Posterior cingulate gyrus (tissue), 11 donors: ENCODE measurements at regions of chr12 and their contacts with region 1.

Region 1: GRCh38 chr12:10235761-10236631 is 23.3 kb downstream of the GABARAPL1 start:
- DNase-seq: peak in 5 of 10 donors; percentile 38 to 88 (median 51)

Region 2: GRCh38 chr12:10012630-10013330 is 223.2 kb before region 1 on chr12:
- intact Hi-C with region 1: no loop called
- DNase-seq: no peak

Region 3: GRCh38 chr12:10331642-10332239 is 95.7 kb after region 1 on chr12:
- intact Hi-C with region 1: loop called (anchors 5 kb)
- DNase-seq: no peak

Region 4: DNA sequence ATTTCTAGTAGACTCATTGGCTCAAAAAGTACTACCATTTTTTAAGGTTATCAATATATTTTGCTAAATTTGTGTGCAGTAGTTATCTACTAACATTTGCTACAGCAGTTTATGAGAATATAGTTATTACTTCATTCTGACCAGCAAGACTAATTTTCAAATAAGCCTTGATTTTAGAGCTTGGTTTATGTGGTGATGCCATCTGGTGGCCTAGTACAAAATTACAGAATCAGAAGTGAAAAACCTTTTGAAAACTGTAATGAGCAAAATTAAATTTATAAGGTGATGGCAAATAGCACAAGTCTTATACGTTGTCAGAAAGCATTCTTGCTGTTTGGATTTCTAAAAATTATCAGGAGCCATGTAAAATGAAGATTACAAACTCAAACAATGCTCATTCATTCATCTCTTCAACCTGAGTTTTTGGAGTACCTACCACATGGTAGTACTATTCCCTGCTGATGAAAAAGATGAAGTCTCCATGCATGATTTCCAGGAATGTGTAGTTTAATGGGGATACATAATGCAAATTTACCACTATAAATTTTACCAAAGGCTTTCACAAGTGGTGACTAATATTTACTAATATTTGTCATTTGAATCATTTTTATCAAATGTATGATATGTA is 326.4 kb after region 1 on chr12:
- intact Hi-C with region 1: loop called (anchors 2 kb)
- DNase-seq: peak in 1 of 10 donors; percentile 14

Region 5: DNA sequence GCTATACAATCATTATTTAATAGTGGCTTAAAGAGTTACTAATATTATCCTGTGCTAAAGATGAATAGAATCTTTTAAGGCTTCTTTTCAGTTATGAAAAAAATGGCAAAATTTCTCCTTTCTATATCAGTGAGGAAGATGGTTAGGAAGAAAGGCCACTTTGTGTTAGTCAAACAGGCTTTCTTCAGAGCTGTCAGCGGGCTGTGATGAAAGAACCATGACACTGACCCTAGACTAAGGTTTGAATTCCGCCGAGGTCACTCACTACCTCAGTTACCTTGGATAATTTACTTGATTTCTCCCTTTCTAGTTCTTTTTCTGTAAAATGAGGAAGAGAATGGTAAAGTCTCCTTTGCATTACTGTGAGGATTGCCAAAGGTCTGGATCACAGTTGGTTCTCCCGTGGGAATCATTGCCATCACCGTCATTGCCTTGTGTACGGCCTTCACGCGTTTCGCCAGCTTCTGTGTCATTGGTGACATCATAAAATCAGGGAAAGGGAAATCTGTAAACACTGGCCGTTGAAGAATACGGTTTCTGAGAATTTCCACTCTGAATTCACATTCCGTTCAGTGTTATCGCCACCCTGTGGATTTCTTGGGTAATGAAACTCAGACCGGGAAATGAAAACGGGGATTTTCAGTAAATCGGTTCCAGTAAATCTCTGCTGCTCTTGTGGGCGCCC is 513.8 kb after region 1 on chr12:
- intact Hi-C with region 1: loop called (anchors 5 kb)
- DNase-seq: peak in 9 of 10 donors; percentile 20 to 93 (median 67)